ENCODE measurements at regions of chr19 and their contacts with region 1.

Region 1: DNA sequence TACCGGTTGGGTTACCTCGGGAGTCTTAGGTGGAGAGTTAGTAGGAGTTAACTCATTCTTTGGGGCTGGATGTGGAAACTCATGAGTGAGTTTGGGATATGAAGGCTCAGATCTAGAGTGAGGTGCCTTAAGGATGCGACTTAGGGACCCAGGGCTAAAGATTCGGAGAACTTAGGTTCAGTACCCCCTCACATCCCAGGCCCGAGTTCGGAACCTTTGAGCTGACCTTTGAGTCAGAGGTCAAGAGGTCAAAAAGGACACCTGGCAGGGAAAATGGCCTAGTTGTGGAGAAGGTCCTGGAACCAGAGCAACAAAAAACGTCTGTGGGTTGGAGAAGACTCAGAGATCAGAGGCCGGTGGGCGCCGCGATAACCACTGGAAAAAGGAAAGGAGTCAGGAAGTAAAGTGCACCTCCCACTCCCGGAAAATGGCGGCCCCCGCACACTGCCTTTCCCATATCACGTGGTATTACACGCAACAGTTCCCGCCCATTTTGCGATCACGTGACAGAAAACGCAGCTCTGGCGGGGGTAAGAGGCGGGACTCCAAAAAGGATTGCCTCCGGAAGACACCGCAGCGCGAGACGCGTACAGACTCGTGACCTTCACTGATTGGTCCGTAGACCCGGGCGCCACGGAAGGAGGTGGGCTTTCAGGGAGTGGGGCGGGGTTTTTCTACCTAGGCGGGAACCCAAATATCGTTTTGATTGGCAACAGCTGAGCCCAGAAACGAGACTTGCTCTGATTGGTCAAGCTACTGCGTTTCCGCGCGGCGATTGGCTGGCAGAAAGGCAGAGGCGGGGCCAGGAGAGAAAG is at the start of gene ACTMAP:
- DNase-seq: peak; percentile 98 to 99
- H3K4me3 ChIP-seq: peak within 1 kb of the TSS; percentile 80 to 99 (median 90)
- H3K27ac ChIP-seq: peak within 1 kb of the TSS; percentile 99
- H3K4me1 ChIP-seq: peaks cover 0 to 10% (median 2%) of the 10 kb centered on the region in 4 experiments; a peak in 4 of 7 replicates
- H3K27me3 ChIP-seq: no peaks in the 10 kb centered on the region
- CTCF ChIP-seq: no peak
- EP300 ChIP-seq: 0 out of 3 replicates have a peak, but pooled peaks of 1 of the 2 experiments have one; percentile 60
- POLR2A ChIP-seq: peak in 1 of 2 experiments; percentile 63; a peak in 1 of 3 replicates
- RAD21 ChIP-seq: no peak
- total RNA-seq, gene ACTMAP: 24.8 and 26.5 TPM in 2 replicates

Region 2: GRCh38 chr19:40716655-40717324 is 33.5 kb before region 1 on chr19 and contains the starts of genes COQ8B and ITPKC:
- CTCF ChIA-PET with region 1: interaction called, 4 read pairs
- POLR2A ChIA-PET with region 1: interaction called, 28 read pairs
- DNase-seq: peak; percentile 90 to 100
- H3K4me3 ChIP-seq: peak within 1 kb of the TSS; percentile 72 to 94 (median 90)
- H3K27ac ChIP-seq: peak within 1 kb of the TSS; percentile 74
- H3K4me1 ChIP-seq: peaks cover 0 to 25% (median 8%) of the 10 kb centered on the region in 4 experiments; a peak in 6 of 7 replicates
- H3K27me3 ChIP-seq: no peaks in the 10 kb centered on the region
- CTCF ChIP-seq: peak in 1 of 3 experiments; percentile 3; a peak in 1 of 4 replicates
- EP300 ChIP-seq: peak; percentile 71 to 99
- POLR2A ChIP-seq: peak in 1 of 2 experiments; percentile 70; a peak in 1 of 3 replicates
- RAD21 ChIP-seq: no peak
- total RNA-seq, gene COQ8B: 39.3 and 41.7 TPM in 2 replicates
- total RNA-seq, gene ITPKC: 8.9 and 9.5 TPM in 2 replicates

Region 3: DNA sequence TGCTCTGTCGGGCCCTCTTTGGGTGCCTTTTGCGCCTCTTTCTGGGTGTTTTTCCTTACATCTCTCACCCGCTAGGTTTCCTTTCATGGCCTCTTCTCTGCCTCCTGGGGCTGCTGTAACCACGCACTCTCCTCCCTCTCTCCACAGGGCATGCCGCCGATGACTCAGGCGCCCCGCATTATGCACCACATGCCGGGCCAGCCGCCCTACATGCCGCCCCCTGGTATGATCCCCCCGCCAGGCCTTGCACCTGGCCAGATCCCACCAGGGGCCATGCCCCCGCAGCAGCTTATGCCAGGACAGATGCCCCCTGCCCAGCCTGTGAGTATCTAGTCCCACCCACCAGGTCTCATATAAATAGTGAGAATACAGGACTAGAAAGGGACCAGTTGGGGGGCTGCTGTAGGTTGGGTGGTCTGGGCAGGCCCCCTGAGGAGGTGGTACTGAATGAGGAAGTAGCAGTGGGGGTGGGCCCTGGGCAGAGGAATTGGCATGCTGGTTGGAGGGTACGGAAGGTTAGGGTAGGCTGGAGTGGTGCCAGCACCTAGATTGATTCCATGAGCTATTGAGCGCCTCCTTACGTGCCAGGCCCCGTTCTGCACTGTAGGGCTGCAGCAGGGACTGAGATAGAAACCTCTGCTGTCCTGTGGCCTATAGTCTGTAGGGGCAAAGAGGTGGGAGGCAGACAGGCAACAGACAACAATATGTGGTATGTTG is 12.6 kb after region 1 on chr19:
- CTCF ChIA-PET with region 1: no interaction called
- POLR2A ChIA-PET with region 1: interaction called, 399 read pairs
- DNase-seq: no peak
- H3K4me3 ChIP-seq: no peak overlapping the region
- H3K27ac ChIP-seq: no peak overlapping the region
- H3K4me1 ChIP-seq: no peaks in the 10 kb centered on the region
- H3K27me3 ChIP-seq: no peaks in the 10 kb centered on the region
- CTCF ChIP-seq: no peak
- EP300 ChIP-seq: no peak
- POLR2A ChIP-seq: no peak
- RAD21 ChIP-seq: no peak

Region 4: GRCh38 chr19:40798223-40798996 is 48.1 kb after region 1 on chr19:
- CTCF ChIA-PET with region 1: interaction called, 3 read pairs
- POLR2A ChIA-PET with region 1: interaction called, 241 read pairs
- DNase-seq: peak; percentile 99 to 100
- H3K4me3 ChIP-seq: peak overlapping the region; percentile 52 to 70 (median 64)
- H3K27ac ChIP-seq: peak overlapping the region; percentile 79
- H3K4me1 ChIP-seq: peaks cover 0 to 32% (median 19%) of the 10 kb centered on the region in 4 experiments; a peak in 6 of 7 replicates
- H3K27me3 ChIP-seq: no peaks in the 10 kb centered on the region
- CTCF ChIP-seq: peak; percentile 51 to 84 (median 59); a peak in 3 of 4 replicates
- EP300 ChIP-seq: no peak
- POLR2A ChIP-seq: peak; percentile 51 to 92
- RAD21 ChIP-seq: peak; percentile 45 to 52

Region 5: GRCh38 chr19:40813182-40813958 is 63.1 kb after region 1 on chr19:
- CTCF ChIA-PET with region 1: interaction called, 26 read pairs
- POLR2A ChIA-PET with region 1: interaction called, 241 read pairs
- DNase-seq: no peak
- H3K4me3 ChIP-seq: no peak overlapping the region
- H3K27ac ChIP-seq: no peak overlapping the region
- H3K4me1 ChIP-seq: peaks cover 2 to 15% (median 6%) of the 10 kb centered on the region in 4 experiments
- H3K27me3 ChIP-seq: peaks cover 0 to 3% (median 1%) of the 10 kb centered on the region in 4 experiments; a peak in 3 of 7 replicates
- CTCF ChIP-seq: no peak
- EP300 ChIP-seq: no peak
- POLR2A ChIP-seq: no peak
- RAD21 ChIP-seq: no peak

Region 6: DNA sequence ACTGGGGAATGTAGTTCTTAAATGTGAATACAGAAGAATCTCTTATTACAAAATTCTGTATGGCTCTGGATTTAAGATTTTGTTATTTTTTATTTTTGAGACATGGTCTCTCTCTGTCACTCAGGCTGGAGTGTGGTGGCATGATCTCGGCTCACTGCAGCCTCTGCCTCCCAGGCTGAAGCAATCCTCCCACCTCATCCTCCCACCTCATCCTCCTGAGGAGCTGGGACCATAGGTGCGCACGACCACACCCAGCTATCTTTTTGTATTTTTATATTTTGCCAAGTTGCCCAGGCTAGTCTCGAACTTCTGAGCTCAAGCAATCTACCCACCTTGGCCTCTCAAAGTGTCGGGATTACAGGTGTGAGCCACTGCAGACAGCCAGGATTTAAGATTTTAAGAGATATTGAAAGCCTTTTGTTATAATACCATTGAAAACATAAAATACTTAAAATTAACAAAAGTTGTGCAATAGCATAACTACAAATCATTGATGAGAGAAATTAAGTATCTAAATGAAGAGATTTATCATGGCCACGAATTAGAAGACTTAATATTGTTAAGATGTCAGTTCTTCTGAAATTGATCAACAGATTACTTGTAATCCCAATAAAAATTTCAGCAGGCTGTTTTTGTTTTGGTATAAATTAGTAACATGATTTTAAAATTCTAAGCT is 86.6 kb after region 1 on chr19:
- CTCF ChIA-PET with region 1: no interaction called
- POLR2A ChIA-PET with region 1: no interaction called
- DNase-seq: no peak
- H3K4me3 ChIP-seq: no peak overlapping the region
- H3K27ac ChIP-seq: no peak overlapping the region
- H3K4me1 ChIP-seq: no peaks in the 10 kb centered on the region
- H3K27me3 ChIP-seq: no peaks in the 10 kb centered on the region
- CTCF ChIP-seq: no peak
- EP300 ChIP-seq: no peak
- POLR2A ChIP-seq: no peak
- RAD21 ChIP-seq: no peak